Common myeloid progenitor, CD34-positive (primary cell): ENCODE measurements at regions of chr20 and their contacts with region 1.

Region 1: DNA sequence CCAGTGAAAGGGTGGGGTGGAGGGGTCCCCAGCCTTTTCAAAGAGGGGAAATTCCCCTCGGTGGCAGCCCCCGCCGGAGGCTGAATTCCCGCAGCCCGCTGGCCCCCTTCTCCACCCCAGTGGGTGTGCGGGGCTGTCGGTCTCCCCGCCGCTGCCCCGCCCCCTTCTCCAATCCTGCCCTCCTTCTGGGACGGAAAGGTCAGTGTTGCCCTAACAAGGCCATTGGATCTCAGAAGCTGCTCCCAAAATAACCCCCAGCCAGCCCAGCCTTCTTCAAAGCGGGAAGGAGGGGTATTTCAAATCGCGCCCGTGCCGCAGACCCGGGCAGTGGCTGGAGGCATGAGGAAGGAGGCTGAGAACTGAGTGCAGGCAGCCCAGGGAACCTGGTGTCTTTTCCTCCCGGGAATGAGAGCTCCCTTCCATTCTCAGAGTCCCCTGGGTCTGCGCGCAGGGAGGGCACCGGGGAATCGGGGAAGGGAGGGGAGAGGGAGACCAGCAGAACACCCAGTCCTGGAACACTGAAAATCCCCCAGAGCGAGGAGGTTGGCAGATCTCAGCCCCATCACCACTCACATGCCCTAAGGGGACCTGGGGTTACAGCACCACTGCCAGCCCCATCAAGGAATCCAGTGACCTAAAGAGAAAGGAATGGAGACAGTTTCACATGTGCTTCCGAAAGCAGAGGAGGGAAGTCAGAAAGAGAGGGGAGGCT is at the start of gene JPH2:
- DNase-seq: no peak
- H3K4me3 ChIP-seq: peak within 1 kb of the TSS in 3 of 7 experiments; percentile 16 to 54 (median 32)
- H3K27ac ChIP-seq: no peak within 1 kb of the TSS
- H3K4me1 ChIP-seq: peaks cover 0 to 14% (median 9%) of the 10 kb centered on the region in 4 experiments
- H3K27me3 ChIP-seq: peaks cover 2 to 64% (median 25%) of the 10 kb centered on the region in 5 experiments

Region 2: GRCh38 chr20:44115762-44116644 is 71.2 kb before region 1 on chr20:
- CTCF ChIA-PET with region 1: interaction called, 71 read pairs
- POLR2A ChIA-PET with region 1: no interaction called
- DNase-seq: no peak
- H3K4me3 ChIP-seq: no peak overlapping the region
- H3K27ac ChIP-seq: no peak overlapping the region
- H3K4me1 ChIP-seq: peaks cover 0 to 3% (median 0%) of the 10 kb centered on the region in 4 experiments
- H3K27me3 ChIP-seq: peaks cover 0 to 38% (median 21%) of the 10 kb centered on the region in 5 experiments

Region 3: GRCh38 chr20:44123251-44123650 is 64.0 kb before region 1 on chr20:
- CTCF ChIA-PET with region 1: interaction called, 71 read pairs
- POLR2A ChIA-PET with region 1: no interaction called
- DNase-seq: no peak
- H3K4me3 ChIP-seq: no peak overlapping the region
- H3K27ac ChIP-seq: no peak overlapping the region
- H3K4me1 ChIP-seq: no peaks in the 10 kb centered on the region
- H3K27me3 ChIP-seq: peaks cover 0 to 23% (median 5%) of the 10 kb centered on the region in 5 experiments

Region 4: DNA sequence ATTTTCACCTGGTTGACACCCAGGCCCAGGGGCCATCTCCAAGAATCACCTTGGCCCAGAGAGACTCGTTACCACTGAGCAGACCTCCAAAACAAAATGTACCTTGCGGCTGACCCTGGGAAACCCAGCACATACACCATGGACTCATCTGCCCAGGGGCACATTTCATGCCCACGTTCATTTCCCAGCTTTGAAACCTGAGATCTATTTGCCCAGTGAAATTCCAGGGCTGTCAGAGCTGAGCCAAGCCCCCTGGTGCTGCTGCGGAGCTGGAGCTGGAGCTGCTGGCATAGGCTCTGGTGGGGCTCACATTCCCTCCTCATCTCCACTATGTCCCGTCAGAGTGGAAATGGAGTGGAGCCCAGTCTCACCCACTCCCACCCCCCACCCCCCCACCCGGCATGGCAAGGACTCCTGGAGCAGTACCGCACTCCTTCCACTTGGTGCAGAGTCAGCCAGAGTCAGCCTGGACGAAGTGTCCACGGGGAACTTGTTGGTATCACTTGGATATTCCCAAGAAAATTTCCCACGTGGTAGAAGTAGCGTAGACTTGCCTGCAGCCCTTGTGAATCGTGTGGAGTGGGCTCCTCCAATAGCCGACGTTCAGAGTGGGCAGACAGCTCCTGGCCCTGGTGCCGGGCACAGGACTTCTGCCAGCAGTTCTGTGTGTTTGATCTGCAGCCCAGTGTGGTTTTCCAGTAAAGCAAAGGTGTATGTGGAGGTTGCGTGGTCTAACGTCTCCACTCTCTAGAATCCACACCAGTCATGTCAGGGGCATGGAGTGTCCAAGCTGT is 41.5 kb after region 1 on chr20:
- CTCF ChIA-PET with region 1: no interaction called
- POLR2A ChIA-PET with region 1: no interaction called
- DNase-seq: no peak
- H3K4me3 ChIP-seq: no peak overlapping the region
- H3K27ac ChIP-seq: no peak overlapping the region
- H3K4me1 ChIP-seq: no peaks in the 10 kb centered on the region
- H3K27me3 ChIP-seq: no peaks in the 10 kb centered on the region

Region 5: GRCh38 chr20:44271915-44272663 is 84.9 kb after region 1 on chr20:
- CTCF ChIA-PET with region 1: no interaction called
- POLR2A ChIA-PET with region 1: no interaction called
- DNase-seq: no peak
- H3K4me3 ChIP-seq: no peak overlapping the region
- H3K27ac ChIP-seq: no peak overlapping the region
- H3K4me1 ChIP-seq: no peaks in the 10 kb centered on the region
- H3K27me3 ChIP-seq: no peaks in the 10 kb centered on the region

Region 6: DNA sequence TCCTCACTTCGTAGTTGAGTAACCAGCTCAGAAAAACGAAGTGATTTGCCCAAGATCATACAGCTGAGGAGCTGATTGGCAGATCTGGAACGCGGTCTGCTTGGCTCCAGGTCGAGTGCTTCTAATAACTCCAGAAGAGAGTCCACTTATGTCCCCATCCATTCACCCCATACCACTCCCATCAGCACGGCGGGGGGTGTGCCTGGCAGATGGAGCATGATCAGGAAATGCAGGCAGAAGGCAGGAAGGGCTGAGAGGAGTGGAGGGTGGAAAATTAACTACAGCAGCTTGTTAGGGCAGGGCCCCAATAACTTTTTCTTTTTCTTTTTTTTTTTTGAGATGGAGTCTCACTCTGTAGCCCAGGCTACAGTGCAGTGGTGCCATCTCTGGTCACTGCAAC is 108.8 kb after region 1 on chr20:
- CTCF ChIA-PET with region 1: no interaction called
- POLR2A ChIA-PET with region 1: no interaction called
- DNase-seq: no peak
- H3K4me3 ChIP-seq: no peak overlapping the region
- H3K27ac ChIP-seq: no peak overlapping the region
- H3K4me1 ChIP-seq: no peaks in the 10 kb centered on the region
- H3K27me3 ChIP-seq: no peaks in the 10 kb centered on the region